Aorta (tissue), 5 donors: ENCODE measurements at regions of chr4 and their contacts with region 1.

Region 1: GRCh38 chr4:118888666-118889311 is at the start of gene SYNPO2:
- DNase-seq: peak; percentile 90 to 93
- ATAC-seq: peak; percentile 95
- H3K4me3 ChIP-seq: peak within 1 kb of the TSS; percentile 69 to 99
- H3K27ac ChIP-seq: peak within 1 kb of the TSS; percentile 8 to 93
- H3K4me1 ChIP-seq: peaks cover 0 to 2% of the 10 kb centered on the region in 2 donors
- H3K27me3 ChIP-seq: no peaks in the 10 kb centered on the region
- total RNA-seq, gene SYNPO2: 393 to 1,531 TPM

Region 2: DNA sequence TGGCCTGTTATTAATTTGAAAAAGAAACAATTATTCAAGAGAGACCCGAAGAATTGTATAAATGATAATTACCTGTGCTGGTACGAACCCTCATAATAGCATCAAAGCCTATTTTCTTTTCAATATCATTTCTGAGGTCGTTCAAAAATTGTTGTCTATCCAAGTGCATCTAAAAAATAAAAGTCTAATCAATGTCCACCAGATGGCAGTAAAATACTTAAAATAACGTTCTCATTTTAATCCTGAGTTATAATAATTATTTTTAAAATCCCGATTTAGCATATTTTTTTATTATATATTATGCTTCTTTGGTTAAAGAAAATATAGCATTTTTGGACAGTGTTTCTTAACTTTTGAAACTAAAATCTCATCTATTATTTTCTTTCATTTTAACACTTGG is 147.9 kb before region 1 on chr4:
- intact Hi-C with region 1: loop called (anchors 2 to 5 kb)
- DNase-seq: no peak
- ATAC-seq: no peak
- H3K4me3 ChIP-seq: no peak overlapping the region
- H3K27ac ChIP-seq: no peak overlapping the region
- H3K4me1 ChIP-seq: peaks cover 2 to 3% of the 10 kb centered on the region in 2 donors
- H3K27me3 ChIP-seq: no peaks in the 10 kb centered on the region

Region 3: GRCh38 chr4:118772081-118772766 is 116.6 kb before region 1 on chr4:
- intact Hi-C with region 1: loop called (anchors 5 to 10 kb)
- DNase-seq: no peak
- ATAC-seq: peak; percentile 86
- H3K4me3 ChIP-seq: peak overlapping the region; percentile 14 to 48
- H3K27ac ChIP-seq: peak overlapping the region; percentile 43 to 79
- H3K4me1 ChIP-seq: peaks cover 5 to 9% of the 10 kb centered on the region in 2 donors
- H3K27me3 ChIP-seq: no peaks in the 10 kb centered on the region

Region 4: DNA sequence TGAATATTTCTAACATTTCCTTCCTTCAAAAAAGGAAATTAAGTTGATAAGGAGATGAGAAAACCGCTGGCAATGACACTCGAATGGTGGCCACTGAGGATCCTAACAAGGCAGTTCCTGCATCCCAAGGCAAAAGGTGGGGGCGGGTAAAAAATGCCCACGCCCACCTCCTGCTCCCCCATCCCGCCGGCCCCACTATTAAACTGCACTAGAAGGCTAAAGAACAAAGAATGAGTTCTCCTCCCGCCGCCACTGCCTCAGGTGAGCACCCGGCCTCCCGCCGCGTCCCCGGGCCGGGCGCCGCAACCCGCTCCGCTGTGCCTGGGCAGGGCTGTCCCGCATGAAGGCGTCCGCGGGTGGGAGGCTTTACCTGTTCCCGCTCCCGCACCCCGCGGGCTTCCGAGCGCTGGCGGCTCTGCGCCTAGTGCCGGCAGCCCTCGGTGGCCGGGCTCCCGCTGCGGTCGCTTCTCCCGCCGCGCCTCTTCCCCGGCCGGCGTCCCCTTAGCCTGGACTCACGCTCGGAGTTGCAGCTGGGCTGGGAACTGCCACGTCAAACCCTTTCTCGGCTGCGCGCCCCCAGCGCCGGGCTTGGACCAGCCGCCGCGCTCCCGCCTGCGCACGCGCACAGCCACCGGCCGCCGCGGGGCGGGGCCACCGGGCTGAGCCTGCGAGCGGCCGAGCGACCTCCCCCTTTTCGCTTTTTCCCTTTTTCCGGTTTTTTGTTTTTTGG is 53.1 kb before region 1 on chr4 and contains the start of gene SEC24D:
- intact Hi-C with region 1: loop called (anchors 5 kb)
- DNase-seq: peak; percentile 94 to 97
- ATAC-seq: peak; percentile 96
- H3K4me3 ChIP-seq: peak within 1 kb of the TSS; percentile 79 to 93
- H3K27ac ChIP-seq: peak within 1 kb of the TSS; percentile 95 to 96
- H3K4me1 ChIP-seq: peaks cover 2 to 3% of the 10 kb centered on the region in 2 donors
- H3K27me3 ChIP-seq: no peaks in the 10 kb centered on the region
- total RNA-seq, gene SEC24D: 126 to 127 TPM

Region 5: GRCh38 chr4:118981839-118982381 is 93.1 kb after region 1 on chr4:
- intact Hi-C with region 1: no loop called
- DNase-seq: peak in 1 of 2 donors; percentile 75
- ATAC-seq: peak; percentile 90
- H3K4me3 ChIP-seq: no peak overlapping the region
- H3K27ac ChIP-seq: peak overlapping the region in 1 of 2 donors; percentile 68
- H3K4me1 ChIP-seq: peaks cover 18 to 22% of the 10 kb centered on the region in 2 donors
- H3K27me3 ChIP-seq: no peaks in the 10 kb centered on the region